ENCODE measurements at regions of chr9 and their contacts with region 1.

Region 1: DNA sequence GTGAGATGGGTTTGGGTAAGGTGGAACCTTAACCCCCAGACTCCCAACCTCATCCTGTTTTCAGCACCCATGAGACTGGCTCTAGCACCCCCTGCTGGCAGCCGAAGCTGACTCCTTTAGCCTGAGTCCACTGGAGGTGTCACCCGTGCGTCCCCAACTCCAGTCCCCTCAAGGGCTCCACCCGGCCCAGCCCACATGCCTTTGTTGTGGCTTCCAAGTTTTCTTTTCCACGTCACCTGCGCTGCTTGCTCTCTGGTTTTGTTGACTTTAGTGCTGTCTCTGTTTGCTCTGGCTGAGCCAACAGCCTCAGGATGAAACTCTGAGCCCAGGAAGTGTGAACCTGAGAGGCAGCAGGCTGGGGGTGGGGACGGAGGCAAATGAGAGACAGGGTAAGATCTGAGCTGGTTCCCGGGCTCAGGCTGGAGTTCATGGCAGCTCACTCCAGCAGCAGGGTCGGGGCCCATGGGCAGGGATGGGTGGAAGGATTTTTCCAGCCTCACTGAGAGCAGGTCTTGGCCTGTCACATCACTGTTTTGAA is 13.2 kb upstream of the AQP7 start:
- DNase-seq: no peak
- H3K4me3 ChIP-seq: no peak overlapping the region
- H3K27ac ChIP-seq: no peak overlapping the region
- H3K27me3 ChIP-seq: peaks cover 18% of the 10 kb centered on the region
- CTCF ChIP-seq: peak; percentile 74

Region 2: GRCh38 chr9:33404788-33405362 is 10.7 kb before region 1 on chr9:
- CTCF ChIA-PET with region 1: interaction called, 33 read pairs
- POLR2A ChIA-PET with region 1: no interaction called
- DNase-seq: no peak
- H3K4me3 ChIP-seq: no peak overlapping the region
- H3K27ac ChIP-seq: no peak overlapping the region
- H3K27me3 ChIP-seq: no peaks in the 10 kb centered on the region
- CTCF ChIP-seq: no peak

Region 3: DNA sequence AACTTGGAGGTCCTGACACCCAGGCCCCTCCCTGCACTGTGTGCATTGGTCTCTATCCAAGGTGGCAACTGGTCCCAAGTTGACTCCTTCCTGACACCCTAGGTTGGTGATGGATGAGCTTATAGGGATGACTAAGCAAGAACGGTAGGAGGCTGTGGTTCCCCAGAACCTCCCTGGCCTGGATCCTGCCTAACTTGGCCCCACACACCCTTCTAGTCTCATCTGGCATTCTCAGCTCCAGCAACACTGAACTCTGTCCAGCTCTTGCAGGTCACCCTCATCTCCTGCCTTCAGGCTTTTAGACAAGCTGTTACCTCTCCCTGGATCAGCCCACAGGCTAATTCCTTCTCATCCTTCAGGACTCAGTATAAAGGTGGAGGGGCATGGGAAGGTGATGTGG is 15.4 kb after region 1 on chr9:
- CTCF ChIA-PET with region 1: interaction called, 17 read pairs
- POLR2A ChIA-PET with region 1: interaction called, 3 read pairs
- DNase-seq: no peak
- H3K4me3 ChIP-seq: no peak overlapping the region
- H3K27ac ChIP-seq: no peak overlapping the region
- H3K27me3 ChIP-seq: peaks cover 17% of the 10 kb centered on the region
- CTCF ChIP-seq: no peak

Measured in AG04450 (cell line).